ENCODE measurements at regions of chr10 and their contacts with region 1.

Region 1: GRCh38 chr10:28077889-28078288 is 79.0 kb upstream of the ODAD2 start:
- DNase-seq: no peak
- ATAC-seq: no peak
- H3K4me3 ChIP-seq: no peak overlapping the region
- H3K27ac ChIP-seq: no peak overlapping the region
- H3K4me1 ChIP-seq: no peaks in the 10 kb centered on the region
- H3K27me3 ChIP-seq: no peaks in the 10 kb centered on the region
- CTCF ChIP-seq: no peak

Region 2: DNA sequence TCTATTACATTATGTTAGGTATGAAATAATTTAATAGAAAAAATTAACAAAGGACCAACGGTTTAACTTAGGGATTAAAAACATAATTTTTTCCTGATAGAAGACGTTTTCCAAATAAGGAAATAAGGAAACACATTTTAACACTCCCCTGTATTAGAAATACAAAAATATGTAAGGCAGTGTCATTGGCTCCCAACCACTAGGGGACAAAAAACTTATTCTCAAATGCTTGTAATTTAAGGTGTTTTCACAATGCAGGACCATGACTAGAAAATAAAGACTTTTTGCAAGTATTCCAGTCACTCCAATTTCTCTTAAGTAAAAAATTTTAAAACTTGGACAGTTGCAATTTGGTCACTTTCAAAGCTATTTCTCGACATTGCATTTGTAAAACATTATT is 19.7 kb after region 1 on chr10:
- intact Hi-C with region 1: loop called in 1 of 2 experiments (anchors 2 kb)
- DNase-seq: no peak
- ATAC-seq: no peak
- H3K4me3 ChIP-seq: no peak overlapping the region
- H3K27ac ChIP-seq: no peak overlapping the region
- H3K4me1 ChIP-seq: no peaks in the 10 kb centered on the region
- H3K27me3 ChIP-seq: no peaks in the 10 kb centered on the region
- CTCF ChIP-seq: no peak